ENCODE measurements at regions of chr6 and their contacts with region 1.

Region 1: DNA sequence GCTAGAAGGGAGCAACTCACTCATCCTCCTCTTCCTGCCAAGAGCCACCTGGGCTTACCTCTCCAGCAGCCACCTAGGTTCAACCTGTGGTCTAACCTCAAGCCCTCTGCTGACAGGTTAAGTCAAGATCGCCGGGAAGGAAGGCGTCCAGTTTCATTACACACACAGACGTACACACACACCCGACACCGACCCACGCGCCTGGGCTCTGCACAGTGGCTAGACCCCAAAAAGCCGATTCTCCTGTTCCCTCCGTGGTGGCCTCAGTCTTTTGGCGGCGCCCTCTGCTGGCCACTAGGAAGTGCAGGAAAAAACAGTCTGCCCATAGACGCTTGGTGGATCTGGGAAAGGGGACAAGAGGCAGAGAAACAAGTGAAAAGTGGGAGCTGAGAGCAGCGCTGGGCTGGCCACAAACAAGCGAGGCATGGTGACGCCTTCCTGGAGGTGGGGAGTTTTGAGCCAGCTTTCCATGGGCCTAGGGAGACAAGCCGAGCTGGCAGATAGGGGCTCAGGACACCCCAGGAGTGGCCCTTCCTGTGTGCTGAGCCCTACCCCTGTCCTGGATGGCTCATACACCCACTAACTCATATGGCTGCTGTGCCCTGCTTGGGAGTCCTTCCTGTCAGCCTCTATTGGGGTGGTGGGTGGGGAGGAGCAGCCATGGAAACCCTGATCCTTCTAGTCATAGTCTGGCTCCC is 52.7 kb downstream of the MRPL14 start:
- DNase-seq: peak; percentile 67 to 87
- H3K4me3 ChIP-seq: peak overlapping the region; percentile 66
- H3K27ac ChIP-seq: peak overlapping the region; percentile 94
- H3K4me1 ChIP-seq: peaks cover 80% of the 10 kb centered on the region
- H3K27me3 ChIP-seq: no peaks in the 10 kb centered on the region
- CTCF ChIP-seq: peak; percentile 94

Region 2: GRCh38 chr6:43608310-43608763 is 466.3 kb before region 1 on chr6:
- CTCF ChIA-PET with region 1: interaction called, 3 read pairs
- POLR2A ChIA-PET with region 1: interaction called, 3 read pairs
- intact Hi-C with region 1: loop called (anchors 1 kb)
- DNase-seq: peak; percentile 60 to 63
- H3K4me3 ChIP-seq: no peak overlapping the region
- H3K27ac ChIP-seq: no peak overlapping the region
- H3K4me1 ChIP-seq: no peaks in the 10 kb centered on the region
- H3K27me3 ChIP-seq: no peaks in the 10 kb centered on the region
- CTCF ChIP-seq: peak; percentile 85

Region 3: GRCh38 chr6:43774776-43775534 is 299.6 kb before region 1 on chr6:
- CTCF ChIA-PET with region 1: interaction called, 19 read pairs
- POLR2A ChIA-PET with region 1: interaction called, 9 read pairs
- intact Hi-C with region 1: loop called (anchors 1 kb)
- DNase-seq: peak; percentile 65 to 71
- H3K4me3 ChIP-seq: peak overlapping the region; percentile 90
- H3K27ac ChIP-seq: peak overlapping the region; percentile 94; the same call in 1 of the 2 replicates
- H3K4me1 ChIP-seq: peaks cover 35% of the 10 kb centered on the region
- H3K27me3 ChIP-seq: no peaks in the 10 kb centered on the region
- CTCF ChIP-seq: peak; percentile 85

Region 4: GRCh38 chr6:43951063-43951755 is 123.4 kb before region 1 on chr6:
- CTCF ChIA-PET with region 1: interaction called, 5 read pairs
- POLR2A ChIA-PET with region 1: no interaction called
- intact Hi-C with region 1: loop called (anchors 1 kb)
- DNase-seq: peak; percentile 44 to 62
- H3K4me3 ChIP-seq: no peak overlapping the region
- H3K27ac ChIP-seq: no peak overlapping the region
- H3K4me1 ChIP-seq: peaks cover 21% of the 10 kb centered on the region
- H3K27me3 ChIP-seq: no peaks in the 10 kb centered on the region
- CTCF ChIP-seq: peak; percentile 63

Region 5: GRCh38 chr6:44034391-44034861 is 40.2 kb before region 1 on chr6:
- CTCF ChIA-PET with region 1: interaction called, 13 read pairs
- POLR2A ChIA-PET with region 1: no interaction called
- intact Hi-C with region 1: loop called (anchors 2 kb)
- DNase-seq: peak; percentile 87 to 94
- H3K4me3 ChIP-seq: peak overlapping the region; percentile 48; the same call in 1 of the 2 replicates
- H3K27ac ChIP-seq: peak overlapping the region; percentile 98
- H3K4me1 ChIP-seq: peaks cover 87% of the 10 kb centered on the region
- H3K27me3 ChIP-seq: no peaks in the 10 kb centered on the region
- CTCF ChIP-seq: no peak

Region 6: GRCh38 chr6:44058617-44059358 is 15.8 kb before region 1 on chr6:
- CTCF ChIA-PET with region 1: no interaction called
- POLR2A ChIA-PET with region 1: no interaction called
- intact Hi-C with region 1: loop called (anchors 1 kb)
- DNase-seq: peak; percentile 89 to 99
- H3K4me3 ChIP-seq: peak overlapping the region; percentile 25; the same call in 1 of the 2 replicates
- H3K27ac ChIP-seq: peak overlapping the region; percentile 95
- H3K4me1 ChIP-seq: peaks cover 86% of the 10 kb centered on the region
- H3K27me3 ChIP-seq: no peaks in the 10 kb centered on the region
- CTCF ChIP-seq: no peak

Measured in PC-9 (cell line).